PC-3 (cell line): ENCODE measurements at regions of chr18 and their contacts with region 1.

Region 1: GRCh38 chr18:8478166-8478967 is 130.9 kb upstream of the RAB12 start:
- DNase-seq: peak; percentile 84
- ATAC-seq: peak; percentile 78
- H3K4me3 ChIP-seq: no peak overlapping the region
- H3K27ac ChIP-seq: no peak overlapping the region
- H3K4me1 ChIP-seq: no peaks in the 10 kb centered on the region
- H3K27me3 ChIP-seq: no peaks in the 10 kb centered on the region
- CTCF ChIP-seq: peak; percentile 84

Region 2: DNA sequence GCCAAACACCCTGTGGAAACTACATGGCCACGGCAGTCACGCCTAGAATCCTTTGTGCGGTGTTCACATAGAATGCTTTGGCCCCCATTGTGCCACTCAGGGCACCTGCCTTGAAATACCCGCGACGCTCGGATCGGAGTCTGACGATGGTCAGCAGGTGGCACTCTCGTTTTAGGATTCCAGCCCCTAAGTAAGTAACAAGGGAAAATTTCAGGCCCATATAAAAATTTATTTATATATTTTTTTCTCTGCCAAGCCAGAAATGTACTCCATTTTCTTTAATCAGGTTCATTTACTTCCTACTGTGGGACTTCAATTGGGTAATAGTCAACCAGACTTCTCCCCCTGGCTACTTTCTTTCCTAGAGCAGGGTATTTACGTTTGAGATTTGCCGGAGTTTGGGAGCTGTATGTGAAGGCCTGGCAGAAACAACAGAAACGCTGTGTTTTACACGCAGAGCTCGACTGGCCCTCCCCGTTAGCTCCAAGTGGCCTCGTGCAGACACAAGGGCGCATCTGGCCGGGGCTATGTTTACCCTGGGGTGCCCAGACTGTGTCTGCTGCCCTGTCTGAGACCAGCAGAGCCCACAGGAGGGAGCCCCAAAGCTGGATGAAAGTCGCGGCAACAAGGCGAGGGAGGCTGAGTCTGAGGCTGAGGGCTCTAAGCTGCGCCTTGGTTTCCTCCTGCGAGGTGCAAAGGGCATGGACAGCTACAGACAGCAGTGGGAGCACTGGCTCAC is 1205.9 kb before region 1 on chr18:
- CTCF ChIA-PET with region 1: interaction called, 14 read pairs
- POLR2A ChIA-PET with region 1: no interaction called
- intact Hi-C with region 1: loop called (anchors 1 kb)
- DNase-seq: peak; percentile 88
- ATAC-seq: peak; percentile 76
- H3K4me3 ChIP-seq: no peak overlapping the region
- H3K27ac ChIP-seq: no peak overlapping the region
- H3K4me1 ChIP-seq: peaks cover 18% of the 10 kb centered on the region
- H3K27me3 ChIP-seq: peaks cover 2% of the 10 kb centered on the region; the same call in 1 of the 2 replicates
- CTCF ChIP-seq: peak; percentile 69

Region 3: GRCh38 chr18:7601246-7601615 is 877.1 kb before region 1 on chr18:
- CTCF ChIA-PET with region 1: no interaction called
- POLR2A ChIA-PET with region 1: no interaction called
- intact Hi-C with region 1: no loop called
- DNase-seq: peak; percentile 70
- ATAC-seq: peak; percentile 79
- H3K4me3 ChIP-seq: 0 out of 2 replicates have a peak overlapping the region, but pooled peaks have one; percentile 11
- H3K27ac ChIP-seq: 0 out of 2 replicates have a peak overlapping the region, but pooled peaks have one; percentile 2
- H3K4me1 ChIP-seq: peaks cover 27% of the 10 kb centered on the region
- H3K27me3 ChIP-seq: no peaks in the 10 kb centered on the region
- CTCF ChIP-seq: no peak; the same call in 1 of the 2 replicates

Region 4: DNA sequence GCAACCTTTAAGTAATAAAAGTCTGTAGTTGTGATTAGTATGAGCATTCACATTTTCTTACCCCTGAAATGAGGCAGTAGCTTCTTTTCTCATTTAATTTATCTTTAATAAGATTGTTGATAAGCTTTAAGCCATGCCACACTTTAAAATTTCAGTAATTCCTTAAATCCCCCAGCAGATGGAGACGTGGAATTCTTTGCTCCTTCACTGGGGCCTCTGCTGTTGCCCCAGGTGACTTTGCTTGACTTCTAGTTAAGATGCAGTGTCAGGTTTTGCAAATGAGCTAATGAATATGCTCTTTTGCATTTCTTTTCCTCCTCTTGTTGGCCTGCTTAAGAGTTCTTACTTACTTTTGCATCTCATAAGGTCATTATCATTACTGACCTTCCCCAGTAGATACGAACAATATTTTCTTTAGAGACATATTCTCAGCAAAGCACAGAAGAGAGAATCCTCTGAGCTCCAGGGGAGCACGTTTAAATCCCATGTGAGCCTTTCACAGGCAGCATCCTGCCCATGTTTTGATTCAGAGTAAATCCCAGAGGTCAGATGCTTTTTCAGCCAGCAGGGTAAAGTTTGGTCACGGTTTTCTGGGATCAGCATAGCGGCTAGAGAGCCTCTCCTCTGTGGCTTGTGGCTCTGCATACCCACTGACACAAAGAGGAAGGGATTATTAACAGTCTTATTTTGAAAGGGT is 688.4 kb before region 1 on chr18:
- CTCF ChIA-PET with region 1: interaction called, 11 read pairs
- POLR2A ChIA-PET with region 1: no interaction called
- intact Hi-C with region 1: loop called (anchors 1 kb)
- DNase-seq: peak; percentile 65
- ATAC-seq: peak; percentile 90
- H3K4me3 ChIP-seq: no peak overlapping the region
- H3K27ac ChIP-seq: no peak overlapping the region
- H3K4me1 ChIP-seq: no peaks in the 10 kb centered on the region
- H3K27me3 ChIP-seq: no peaks in the 10 kb centered on the region
- CTCF ChIP-seq: peak; percentile 84

Region 5: GRCh38 chr18:8116346-8117005 is 361.9 kb before region 1 on chr18:
- CTCF ChIA-PET with region 1: no interaction called
- POLR2A ChIA-PET with region 1: no interaction called
- intact Hi-C with region 1: loop called (anchors 10 kb)
- DNase-seq: peak; percentile 93
- ATAC-seq: peak; percentile 99
- H3K4me3 ChIP-seq: peak overlapping the region; percentile 31; the same call in 1 of the 2 replicates
- H3K27ac ChIP-seq: peak overlapping the region; percentile 93
- H3K4me1 ChIP-seq: peaks cover 32% of the 10 kb centered on the region
- H3K27me3 ChIP-seq: no peaks in the 10 kb centered on the region
- CTCF ChIP-seq: no peak

Region 6: GRCh38 chr18:8435376-8435775 is 43.0 kb before region 1 on chr18:
- CTCF ChIA-PET with region 1: no interaction called
- POLR2A ChIA-PET with region 1: no interaction called
- intact Hi-C with region 1: loop called (anchors 1 kb)
- DNase-seq: no peak
- ATAC-seq: no peak
- H3K4me3 ChIP-seq: no peak overlapping the region
- H3K27ac ChIP-seq: no peak overlapping the region
- H3K4me1 ChIP-seq: no peaks in the 10 kb centered on the region
- H3K27me3 ChIP-seq: no peaks in the 10 kb centered on the region
- CTCF ChIP-seq: no peak